Gastrocnemius medialis (tissue), 4 donors: ENCODE measurements at regions of chr11 and their contacts with region 1.

Region 1: DNA sequence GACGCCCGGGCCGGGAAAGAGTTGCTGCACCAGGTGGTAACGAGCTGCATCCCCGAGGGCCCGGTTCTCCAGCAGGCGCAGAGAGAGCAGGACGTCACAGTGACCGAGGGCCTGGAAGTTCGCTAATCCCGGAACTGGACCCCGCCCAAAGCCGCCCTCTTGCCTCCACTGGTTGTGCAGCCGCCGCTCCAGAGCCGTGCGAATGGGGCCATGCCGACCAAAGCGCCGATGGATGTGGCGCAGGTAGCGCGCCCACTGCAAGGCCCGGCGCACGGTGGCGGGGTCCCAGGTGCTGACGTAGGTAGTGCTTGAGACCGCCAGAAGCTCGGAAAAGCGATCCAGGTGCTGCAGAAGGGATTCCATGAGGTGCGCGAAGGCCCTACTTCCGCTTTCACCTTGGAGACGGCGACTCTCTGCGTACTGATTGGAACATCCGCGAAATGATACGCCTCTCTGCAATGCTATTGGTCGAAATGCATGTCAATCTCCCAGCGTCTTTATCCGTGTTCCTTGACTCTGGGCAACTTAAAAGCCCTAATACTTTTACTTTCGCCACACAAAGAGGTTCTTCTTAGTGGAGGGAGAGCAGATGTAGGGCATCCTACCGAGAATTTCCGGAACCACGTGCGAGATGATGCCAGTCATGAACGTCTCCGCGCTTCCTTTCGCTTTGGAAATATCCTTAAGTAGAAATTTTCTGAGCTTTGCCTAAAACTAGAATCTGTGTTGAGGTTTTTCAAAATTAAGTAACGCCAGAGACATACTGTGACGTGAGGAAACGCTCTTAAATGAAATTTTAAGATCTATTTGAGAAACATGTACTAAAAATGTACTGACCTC is at the start of gene FANCF:
- DNase-seq: peak; percentile 93
- ATAC-seq: peak; percentile 99 to 100
- H3K4me3 ChIP-seq: peak within 1 kb of the TSS; percentile 75 to 98 (median 88)
- H3K27ac ChIP-seq: peak within 1 kb of the TSS; percentile 80 to 87 (median 86)
- H3K4me1 ChIP-seq: peaks cover 12 to 13% of the 10 kb centered on the region in 2 donors
- H3K27me3 ChIP-seq: no peaks in the 10 kb centered on the region
- CTCF ChIP-seq: no peak
- POLR2A ChIP-seq: no peak
- total RNA-seq, gene FANCF: 0.73 to 2.9 (median 2.1) TPM

Region 2: DNA sequence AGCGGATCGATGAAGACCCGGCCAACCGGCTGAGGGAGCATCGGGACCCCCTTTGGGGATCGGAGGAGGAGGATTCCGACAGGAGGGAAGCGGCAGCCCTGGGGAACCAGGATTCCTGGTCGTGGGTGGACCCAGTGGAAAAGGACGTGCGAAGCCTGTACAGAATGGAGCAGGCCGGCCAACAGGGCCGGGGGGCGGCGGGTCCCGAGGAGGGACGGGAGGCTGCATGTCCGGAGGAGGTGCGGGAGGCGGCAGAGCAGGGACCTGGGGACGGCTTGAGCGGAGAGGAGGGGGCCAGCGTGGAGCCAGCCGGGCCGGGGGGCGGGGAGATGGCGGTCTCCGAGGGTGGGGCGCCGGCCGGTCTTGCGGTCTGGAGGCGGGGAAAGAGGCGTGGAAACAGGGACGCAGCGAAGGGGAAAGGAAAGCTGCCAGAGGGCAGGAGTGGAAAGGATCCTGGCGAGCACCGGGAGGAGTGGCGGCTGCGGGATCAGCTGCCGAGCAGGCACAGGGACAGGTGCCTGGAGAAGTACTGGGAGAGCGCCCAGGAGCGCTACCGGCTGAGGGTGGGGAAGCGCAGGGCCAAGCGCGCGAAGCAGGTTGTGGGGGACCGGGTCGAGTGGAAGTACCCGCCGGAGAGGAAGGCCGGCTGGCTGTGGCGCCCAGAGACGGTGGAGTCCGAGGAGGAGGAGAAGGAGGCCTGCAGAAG is 432.9 kb before region 1 on chr11 and contains the start of gene ANO5:
- in situ Hi-C with region 1: no loop called
- intact Hi-C with region 1: loop called (anchors 10 kb)
- DNase-seq: peak; percentile 92 to 95
- ATAC-seq: peak; percentile 81 to 84
- H3K4me3 ChIP-seq: peak within 1 kb of the TSS; percentile 85 to 96 (median 92)
- H3K27ac ChIP-seq: peak within 1 kb of the TSS; percentile 92 to 99 (median 98)
- H3K4me1 ChIP-seq: peaks cover 21 to 26% of the 10 kb centered on the region in 2 donors
- H3K27me3 ChIP-seq: no peaks in the 10 kb centered on the region
- CTCF ChIP-seq: no peak
- POLR2A ChIP-seq: peak; percentile 90 to 95
- total RNA-seq, gene ANO5: 18.8 to 71.2 (median 35.4) TPM

Region 3: DNA sequence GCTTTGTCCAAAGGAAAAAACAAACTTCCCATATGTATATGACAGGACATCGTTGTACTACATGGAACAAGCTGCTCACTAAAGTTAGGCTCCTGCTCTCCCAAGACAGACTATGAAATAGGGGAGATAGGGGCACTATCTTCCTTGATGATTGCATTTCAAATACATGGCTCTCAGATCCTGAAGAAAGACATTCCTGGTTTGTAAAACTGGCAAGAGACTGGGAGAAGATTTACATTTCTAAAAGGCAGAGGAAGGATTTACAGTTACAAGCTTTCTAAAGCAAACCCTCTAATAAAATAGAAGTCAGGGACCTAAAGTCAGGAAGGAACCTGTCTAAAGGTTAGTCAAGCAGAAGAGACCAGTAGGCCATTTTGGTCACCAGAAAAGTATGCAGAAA is 183.8 kb before region 1 on chr11:
- in situ Hi-C with region 1: no loop called
- intact Hi-C with region 1: no loop called
- DNase-seq: no peak
- ATAC-seq: no peak
- H3K4me3 ChIP-seq: no peak overlapping the region
- H3K27ac ChIP-seq: no peak overlapping the region
- H3K4me1 ChIP-seq: no peaks in the 10 kb centered on the region
- H3K27me3 ChIP-seq: no peaks in the 10 kb centered on the region
- CTCF ChIP-seq: no peak
- POLR2A ChIP-seq: no peak

Region 4: DNA sequence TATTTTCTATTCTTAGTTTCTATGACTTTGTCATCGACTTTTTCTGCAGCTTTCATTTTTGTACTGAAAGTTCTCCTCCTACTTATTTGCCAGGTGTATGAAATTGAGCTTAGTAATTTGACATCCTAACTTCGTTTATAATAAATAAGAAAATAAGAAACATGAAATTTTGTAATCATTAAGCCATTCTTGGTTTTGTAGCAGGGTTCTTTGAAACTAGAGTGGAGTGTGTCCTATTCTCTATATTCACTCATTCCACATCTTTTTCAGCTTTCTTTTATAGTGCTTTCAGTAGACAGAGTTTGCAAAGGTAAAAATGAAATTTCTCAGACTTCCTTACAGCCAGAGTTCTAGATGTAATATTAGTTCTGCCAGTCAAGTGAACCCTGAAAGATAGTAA is 47.8 kb before region 1 on chr11:
- in situ Hi-C with region 1: no loop called
- intact Hi-C with region 1: no loop called
- DNase-seq: no peak
- ATAC-seq: no peak
- H3K4me3 ChIP-seq: no peak overlapping the region
- H3K27ac ChIP-seq: no peak overlapping the region
- H3K4me1 ChIP-seq: no peaks in the 10 kb centered on the region
- H3K27me3 ChIP-seq: no peaks in the 10 kb centered on the region
- CTCF ChIP-seq: no peak
- POLR2A ChIP-seq: no peak

Region 5: DNA sequence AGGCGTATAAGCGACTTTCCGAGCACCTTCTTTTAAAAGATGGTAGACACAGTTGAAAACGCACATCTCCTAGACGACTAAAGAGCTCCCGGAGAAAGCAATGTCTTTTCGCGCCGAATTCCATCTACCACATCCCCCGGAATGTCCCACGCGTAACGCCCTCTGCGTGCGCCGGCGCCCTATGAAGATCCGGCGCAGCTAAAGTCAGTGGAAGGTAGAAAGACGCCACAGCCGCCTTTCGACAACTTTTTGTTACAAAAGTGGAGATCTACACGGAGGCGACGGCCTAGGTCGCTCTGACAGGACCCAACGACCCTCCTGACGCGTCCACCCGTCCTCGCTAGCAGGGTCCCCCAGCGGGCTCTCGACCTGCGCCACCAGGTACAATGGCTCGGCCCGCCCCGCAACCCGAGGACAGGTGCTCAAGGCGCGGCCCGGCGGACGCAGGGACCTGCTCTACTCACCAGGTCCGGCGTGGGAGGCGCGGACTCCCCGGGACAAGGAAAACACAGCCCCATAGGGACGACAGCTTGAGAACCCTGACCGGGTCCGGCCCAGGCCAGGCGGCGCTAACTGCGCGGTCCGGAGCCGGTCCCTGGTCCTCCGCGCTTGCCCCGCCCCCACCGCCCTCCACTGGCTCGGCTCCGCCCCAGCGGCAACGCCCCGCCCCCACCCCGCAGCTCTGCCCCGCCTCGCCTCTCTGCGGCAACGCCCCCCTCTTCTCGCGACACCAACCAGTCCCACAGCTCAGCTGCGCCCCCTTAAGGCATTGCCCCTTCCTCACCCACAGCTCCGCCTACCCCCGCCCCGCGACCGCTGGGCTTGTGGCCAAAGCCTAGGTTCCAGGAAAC is 203.8 kb after region 1 on chr11 and contains the start of gene SVIP:
- in situ Hi-C with region 1: no loop called
- intact Hi-C with region 1: loop called (anchors 5 kb)
- DNase-seq: peak; percentile 88 to 91
- ATAC-seq: peak; percentile 92 to 95
- H3K4me3 ChIP-seq: peak within 1 kb of the TSS; percentile 78 to 92 (median 86)
- H3K27ac ChIP-seq: peak within 1 kb of the TSS; percentile 86 to 92 (median 88)
- H3K4me1 ChIP-seq: peaks cover 4 to 6% of the 10 kb centered on the region in 2 donors
- H3K27me3 ChIP-seq: no peaks in the 10 kb centered on the region
- CTCF ChIP-seq: peak in 4 of 5 experiments; percentile 14 to 74 (median 57)
- POLR2A ChIP-seq: peak; percentile 80 to 81
- total RNA-seq, gene SVIP: 10.2 to 22.0 (median 14.6) TPM